ENCODE measurements at regions of chrX and their contacts with region 1.

Region 1: GRCh38 chrX:22135994-22136684 is 104.0 kb downstream of the PHEX start:
- DNase-seq: peak; percentile 67
- H3K27ac ChIP-seq: peak overlapping the region; percentile 89
- CTCF ChIP-seq: peak; percentile 58

Region 2: GRCh38 chrX:21985332-21985777 is 150.8 kb before region 1 on chrX:
- CTCF ChIA-PET with region 1: interaction called, 12 read pairs
- POLR2A ChIA-PET with region 1: no interaction called
- DNase-seq: peak; percentile 74
- H3K27ac ChIP-seq: no peak overlapping the region
- CTCF ChIP-seq: peak; percentile 83

Region 3: DNA sequence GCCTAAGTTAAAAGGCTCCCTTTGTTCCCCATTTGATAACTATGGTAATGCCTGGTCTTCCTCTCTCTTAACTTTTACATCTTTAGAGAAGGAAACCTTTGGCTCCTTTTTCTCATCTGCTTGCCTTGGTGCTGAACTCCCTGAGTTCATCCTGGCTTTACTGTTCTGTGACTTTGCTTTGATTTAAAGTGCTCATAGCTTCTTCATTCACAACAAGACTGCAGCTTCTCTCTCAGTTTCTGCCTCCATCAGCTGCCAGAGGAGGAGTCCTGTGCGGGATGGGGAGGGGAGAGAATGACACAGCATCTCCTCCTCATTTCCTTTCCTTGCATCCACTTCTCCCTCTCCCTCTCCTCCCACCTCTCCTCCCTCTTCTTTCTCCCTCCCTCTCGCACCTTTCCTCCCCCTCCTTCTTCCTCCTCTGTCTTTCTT is 178.5 kb after region 1 on chrX:
- CTCF ChIA-PET with region 1: no interaction called
- POLR2A ChIA-PET with region 1: no interaction called
- DNase-seq: no peak
- H3K27ac ChIP-seq: no peak overlapping the region
- CTCF ChIP-seq: no peak

Region 4: GRCh38 chrX:22378296-22378695 is 242.2 kb after region 1 on chrX:
- CTCF ChIA-PET with region 1: no interaction called
- POLR2A ChIA-PET with region 1: no interaction called
- DNase-seq: no peak
- H3K27ac ChIP-seq: no peak overlapping the region
- CTCF ChIP-seq: no peak

Measured in RWPE1 (cell line).